Endothelial cell of umbilical vein (primary cell): ENCODE measurements at regions of chr3 and their contacts with region 1.

Region 1: GRCh38 chr3:47009225-47010110 is 30.0 kb downstream of the NBEAL2 start:
- DNase-seq: peak; percentile 91
- H3K4me3 ChIP-seq: peak overlapping the region in 2 of 3 experiments; percentile 53 to 56
- H3K27ac ChIP-seq: peak overlapping the region; percentile 71
- H3K4me1 ChIP-seq: peaks cover 6% of the 10 kb centered on the region
- H3K27me3 ChIP-seq: no peaks in the 10 kb centered on the region
- CTCF ChIP-seq: peak in 1 of 2 donors; percentile 13
- POLR2A ChIP-seq: peak; percentile 95

Region 2: GRCh38 chr3:47370887-47371697 is 361.6 kb after region 1 on chr3:
- CTCF ChIA-PET with region 1: interaction called, 3 read pairs
- POLR2A ChIA-PET with region 1: no interaction called
- dilution Hi-C with region 1: no loop called
- intact Hi-C with region 1: loop called (anchors 10 kb)
- DNase-seq: no peak
- H3K4me3 ChIP-seq: no peak overlapping the region
- H3K27ac ChIP-seq: no peak overlapping the region
- H3K4me1 ChIP-seq: no peaks in the 10 kb centered on the region
- H3K27me3 ChIP-seq: no peaks in the 10 kb centered on the region
- CTCF ChIP-seq: peak in 1 of 2 donors; percentile 41
- POLR2A ChIP-seq: no peak